B cell (primary cell): ENCODE measurements at regions of chr12 and their contacts with region 1.

Region 1: DNA sequence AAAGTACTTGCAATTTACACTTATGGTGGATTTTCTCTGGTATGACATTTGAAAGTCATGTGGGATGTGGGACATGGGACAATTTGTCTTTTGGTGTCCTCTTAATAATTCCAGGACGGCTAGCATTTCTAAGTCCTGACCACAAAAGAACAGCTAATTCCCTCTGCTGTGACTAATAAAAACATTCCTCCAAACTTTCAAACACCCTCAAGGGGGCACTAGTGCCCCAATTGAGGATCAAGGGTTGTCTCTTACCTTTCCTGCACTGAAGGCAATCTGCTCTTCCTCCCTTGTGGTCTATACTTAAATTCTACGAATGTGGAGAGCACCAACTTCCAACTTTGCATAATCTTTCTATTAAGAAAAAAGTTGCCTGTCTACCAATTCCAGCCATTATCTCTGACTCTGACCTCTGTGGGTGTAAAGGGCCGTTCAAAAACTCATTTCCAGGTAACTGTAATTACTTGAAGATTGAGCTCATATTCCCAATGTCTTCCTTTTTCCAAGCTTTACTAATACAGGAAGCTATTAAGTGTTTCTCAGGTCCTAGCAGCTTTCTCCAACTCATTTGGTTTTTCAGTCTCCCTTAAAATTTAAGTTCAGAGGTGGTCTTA is 210.2 kb downstream of the PTPRO start:
- DNase-seq: peak; percentile 76
- ATAC-seq: peak; percentile 84
- H3K4me3 ChIP-seq: no peak overlapping the region
- H3K4me3 Mint-ChIP-seq: no peak overlapping the region
- H3K27ac ChIP-seq: no peak overlapping the region
- H3K27ac Mint-ChIP-seq: no peak overlapping the region
- H3K4me1 ChIP-seq: peaks cover 15 to 16% of the 10 kb centered on the region in 2 donors
- H3K4me1 Mint-ChIP-seq: peaks cover 17% of the 10 kb centered on the region
- H3K27me3 ChIP-seq: no peaks in the 10 kb centered on the region
- H3K27me3 Mint-ChIP-seq: no peaks in the 10 kb centered on the region
- CTCF ChIP-seq: peak; percentile 85

Region 2: GRCh38 chr12:14948672-14949071 is 583.8 kb before region 1 on chr12:
- CTCF ChIA-PET with region 1: no interaction called
- POLR2A ChIA-PET with region 1: no interaction called
- intact Hi-C with region 1: no loop called
- DNase-seq: peak; percentile 88
- ATAC-seq: peak; percentile 94
- H3K4me3 ChIP-seq: peak overlapping the region in 3 of 5 experiments; percentile 26 to 53 (median 27)
- H3K4me3 Mint-ChIP-seq: peak overlapping the region; percentile 84
- H3K27ac ChIP-seq: peak overlapping the region; percentile 65 to 94
- H3K27ac Mint-ChIP-seq: peak overlapping the region; percentile 97
- H3K4me1 ChIP-seq: peaks cover 61 to 71% of the 10 kb centered on the region in 2 donors
- H3K4me1 Mint-ChIP-seq: peaks cover 72% of the 10 kb centered on the region
- H3K27me3 ChIP-seq: no peaks in the 10 kb centered on the region
- H3K27me3 Mint-ChIP-seq: no peaks in the 10 kb centered on the region
- CTCF ChIP-seq: no peak

Region 3: DNA sequence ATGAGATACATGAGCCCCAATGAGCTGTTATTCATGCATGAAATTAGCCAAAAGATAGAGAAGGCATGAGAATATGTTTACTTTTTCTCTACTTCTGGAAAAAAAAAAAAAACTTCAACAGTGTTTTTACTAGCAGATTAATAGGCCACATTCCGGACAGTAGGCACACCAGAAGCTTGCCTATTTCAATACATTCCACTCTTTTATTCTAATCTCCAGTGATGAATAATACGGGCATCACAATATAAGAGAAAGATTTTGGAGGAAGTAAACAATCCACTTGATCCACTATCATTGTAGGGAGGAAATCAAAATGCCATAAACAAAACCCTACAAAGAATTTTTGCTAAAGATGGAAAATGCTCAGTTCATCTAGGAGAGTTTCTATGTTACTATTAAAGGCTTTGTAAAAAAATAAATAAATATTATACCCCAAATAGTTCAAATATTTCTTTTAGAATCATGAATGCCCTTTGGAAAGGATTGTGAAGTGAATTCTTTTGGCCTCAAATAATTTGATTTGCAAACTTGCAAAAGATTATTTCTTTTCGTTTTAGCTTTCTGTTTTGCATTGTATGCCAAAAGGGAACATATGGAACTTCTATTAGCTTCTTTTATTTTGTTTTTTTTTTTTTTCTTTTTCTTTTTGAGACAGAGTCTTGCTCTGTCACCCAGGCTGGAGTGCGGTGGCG is 24.1 kb after region 1 on chr12:
- CTCF ChIA-PET with region 1: interaction called, 141 read pairs
- POLR2A ChIA-PET with region 1: no interaction called
- intact Hi-C with region 1: no loop called
- DNase-seq: no peak
- ATAC-seq: no peak
- H3K4me3 ChIP-seq: no peak overlapping the region
- H3K4me3 Mint-ChIP-seq: no peak overlapping the region
- H3K27ac ChIP-seq: no peak overlapping the region
- H3K27ac Mint-ChIP-seq: no peak overlapping the region
- H3K4me1 ChIP-seq: no peaks in the 10 kb centered on the region
- H3K4me1 Mint-ChIP-seq: peaks cover under 1% of the 10 kb centered on the region
- H3K27me3 ChIP-seq: no peaks in the 10 kb centered on the region
- H3K27me3 Mint-ChIP-seq: no peaks in the 10 kb centered on the region
- CTCF ChIP-seq: no peak

Region 4: DNA sequence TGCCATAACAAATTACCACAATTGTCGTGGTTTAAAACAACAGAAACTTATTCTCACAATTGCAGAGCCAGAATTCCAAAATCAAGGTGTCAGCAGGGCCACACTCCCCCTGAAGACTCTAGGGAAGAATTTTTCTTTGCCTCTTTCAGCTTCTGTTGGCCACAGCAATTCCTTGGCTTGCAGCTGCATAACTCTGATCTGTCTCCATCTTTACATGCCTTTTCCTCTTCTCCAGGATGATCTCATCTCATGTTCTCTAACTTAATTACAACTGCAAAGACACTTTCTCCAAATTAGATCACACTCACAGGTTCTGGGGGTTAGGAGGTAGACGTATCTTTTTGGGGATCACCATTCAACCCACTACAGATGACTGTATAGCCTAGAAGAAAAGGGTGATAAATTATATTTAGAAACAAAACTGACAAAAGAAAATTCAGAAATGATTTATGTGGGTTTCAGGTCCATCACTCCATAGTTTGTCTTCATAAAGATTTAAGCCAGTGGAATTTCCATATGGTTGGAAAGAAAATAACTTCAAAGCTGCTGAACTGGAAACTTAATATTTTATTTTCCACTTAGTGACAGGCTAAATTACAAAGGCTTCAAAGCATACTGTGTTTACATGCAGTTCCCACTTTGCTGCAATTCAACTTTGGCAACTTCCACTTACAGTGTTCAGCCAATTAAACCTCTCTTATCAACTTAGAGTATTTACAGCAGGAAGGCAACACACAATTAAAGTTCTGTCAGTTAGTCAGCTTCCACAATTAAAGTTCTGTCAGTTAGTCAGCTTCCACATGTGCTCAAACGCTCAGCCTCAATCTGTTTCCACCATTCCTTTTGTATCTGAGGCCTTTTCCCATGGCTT is 43.4 kb after region 1 on chr12:
- CTCF ChIA-PET with region 1: interaction called, 702 read pairs
- POLR2A ChIA-PET with region 1: interaction called, 4 read pairs
- intact Hi-C with region 1: loop called (anchors 1 kb)
- DNase-seq: no peak
- ATAC-seq: no peak
- H3K4me3 ChIP-seq: no peak overlapping the region
- H3K4me3 Mint-ChIP-seq: no peak overlapping the region
- H3K27ac ChIP-seq: no peak overlapping the region
- H3K27ac Mint-ChIP-seq: no peak overlapping the region
- H3K4me1 ChIP-seq: peaks cover 7 to 9% of the 10 kb centered on the region in 2 donors
- H3K4me1 Mint-ChIP-seq: peaks cover 6% of the 10 kb centered on the region
- H3K27me3 ChIP-seq: no peaks in the 10 kb centered on the region
- H3K27me3 Mint-ChIP-seq: no peaks in the 10 kb centered on the region
- CTCF ChIP-seq: no peak

Region 5: DNA sequence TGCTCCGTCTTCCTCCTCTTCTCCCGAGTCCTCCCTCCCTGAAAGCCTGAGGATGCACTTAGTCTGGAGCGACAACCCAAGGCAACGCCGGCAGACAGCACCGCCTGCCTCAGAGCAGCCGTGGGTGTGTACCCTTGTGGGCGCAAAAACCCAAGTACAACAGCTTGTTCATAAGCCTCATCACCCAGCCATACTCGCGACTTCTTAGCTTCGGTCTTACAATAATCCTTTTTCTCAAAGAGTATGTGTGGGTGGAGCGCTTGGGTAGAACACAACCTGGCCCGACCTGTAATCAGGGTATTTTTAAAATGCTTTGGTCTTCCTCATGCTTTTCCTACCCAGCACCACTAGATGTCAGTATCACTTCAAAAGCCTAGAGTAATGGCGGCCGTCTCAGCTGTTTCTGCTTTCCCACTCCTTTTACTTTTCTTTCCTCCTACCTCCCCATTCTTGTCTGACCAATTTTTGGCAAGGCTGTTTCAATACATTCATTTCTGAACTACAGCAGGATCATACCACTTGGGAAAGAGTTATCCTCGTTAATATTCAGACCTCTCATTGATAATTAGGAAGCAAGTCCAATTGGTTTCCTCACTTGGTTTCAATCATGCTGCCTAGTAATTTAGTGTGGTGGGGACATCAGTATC is 57.8 kb after region 1 on chr12:
- CTCF ChIA-PET with region 1: interaction called, 702 read pairs
- POLR2A ChIA-PET with region 1: no interaction called
- intact Hi-C with region 1: no loop called
- DNase-seq: peak; percentile 79
- ATAC-seq: peak; percentile 91
- H3K4me3 ChIP-seq: peak overlapping the region in 1 of 5 experiments; percentile 20
- H3K4me3 Mint-ChIP-seq: peak overlapping the region; percentile 81
- H3K27ac ChIP-seq: no peak overlapping the region
- H3K27ac Mint-ChIP-seq: peak overlapping the region; percentile 64
- H3K4me1 ChIP-seq: peaks cover 6 to 8% of the 10 kb centered on the region in 2 donors
- H3K4me1 Mint-ChIP-seq: peaks cover 9% of the 10 kb centered on the region
- H3K27me3 ChIP-seq: no peaks in the 10 kb centered on the region
- H3K27me3 Mint-ChIP-seq: no peaks in the 10 kb centered on the region
- CTCF ChIP-seq: peak; percentile 91

Region 6: GRCh38 chr12:15856097-15856982 is 323.9 kb after region 1 on chr12:
- CTCF ChIA-PET with region 1: interaction called, 48 read pairs
- POLR2A ChIA-PET with region 1: no interaction called
- intact Hi-C with region 1: loop called (anchors 1 kb)
- DNase-seq: peak; percentile 71
- ATAC-seq: no peak
- H3K4me3 ChIP-seq: no peak overlapping the region
- H3K4me3 Mint-ChIP-seq: no peak overlapping the region
- H3K27ac ChIP-seq: no peak overlapping the region
- H3K27ac Mint-ChIP-seq: no peak overlapping the region
- H3K4me1 ChIP-seq: no peaks in the 10 kb centered on the region
- H3K4me1 Mint-ChIP-seq: no peaks in the 10 kb centered on the region
- H3K27me3 ChIP-seq: no peaks in the 10 kb centered on the region
- H3K27me3 Mint-ChIP-seq: no peaks in the 10 kb centered on the region
- CTCF ChIP-seq: peak; percentile 91